ENCODE measurements at regions of chr15 and their contacts with region 1.

Region 1: DNA sequence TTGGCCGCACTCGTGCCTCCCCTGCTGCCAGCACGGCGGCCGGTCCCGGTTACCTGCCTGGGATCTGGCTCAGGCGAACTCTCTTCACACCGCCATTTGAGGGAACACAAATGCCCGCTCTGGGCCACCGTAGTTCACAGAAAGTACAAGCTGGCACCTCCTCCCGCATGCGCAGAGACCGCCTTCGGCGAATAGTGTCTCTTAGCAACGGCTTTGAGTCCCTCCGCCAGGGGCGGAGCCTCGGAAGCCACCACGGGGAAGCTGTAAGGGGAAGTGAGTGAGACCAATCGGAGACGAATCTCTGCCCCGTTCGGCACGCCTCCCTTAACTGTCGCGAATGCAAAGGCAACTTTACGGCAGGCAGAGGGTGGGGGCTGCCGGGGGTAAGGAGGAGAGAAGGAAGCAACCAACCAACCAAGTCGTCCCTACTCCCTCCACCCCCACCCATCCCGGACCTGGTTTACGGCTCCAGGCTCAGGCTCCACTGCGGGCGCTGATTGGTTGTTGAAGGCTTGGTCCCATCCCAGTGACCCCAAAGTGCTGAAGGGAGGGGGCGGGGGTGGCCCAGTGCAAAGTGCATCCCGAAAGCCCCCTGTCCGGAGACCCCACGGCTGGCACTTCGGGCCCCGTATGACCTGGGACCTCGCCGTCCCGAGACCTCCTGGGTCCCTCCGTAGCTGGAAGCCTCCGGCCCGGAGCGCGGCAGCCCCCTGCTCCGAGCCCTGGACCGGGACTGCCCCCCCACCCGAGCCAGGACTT is at the starts of genes ASB7 and LINS1:
- DNase-seq: peak; percentile 97
- ATAC-seq: peak; percentile 87
- H3K4me3 Mint-ChIP-seq: no peak within 1 kb of the TSS
- H3K27ac Mint-ChIP-seq: no peak within 1 kb of the TSS
- H3K4me1 Mint-ChIP-seq: peaks cover 46% of the 10 kb centered on the region
- H3K27me3 Mint-ChIP-seq: no peaks in the 10 kb centered on the region
- CTCF ChIP-seq: no peak
- total RNA-seq, gene ASB7: 18.3 and 21.3 TPM in 2 replicates
- total RNA-seq, gene LINS1: 31.9 and 33.3 TPM in 2 replicates

Region 2: DNA sequence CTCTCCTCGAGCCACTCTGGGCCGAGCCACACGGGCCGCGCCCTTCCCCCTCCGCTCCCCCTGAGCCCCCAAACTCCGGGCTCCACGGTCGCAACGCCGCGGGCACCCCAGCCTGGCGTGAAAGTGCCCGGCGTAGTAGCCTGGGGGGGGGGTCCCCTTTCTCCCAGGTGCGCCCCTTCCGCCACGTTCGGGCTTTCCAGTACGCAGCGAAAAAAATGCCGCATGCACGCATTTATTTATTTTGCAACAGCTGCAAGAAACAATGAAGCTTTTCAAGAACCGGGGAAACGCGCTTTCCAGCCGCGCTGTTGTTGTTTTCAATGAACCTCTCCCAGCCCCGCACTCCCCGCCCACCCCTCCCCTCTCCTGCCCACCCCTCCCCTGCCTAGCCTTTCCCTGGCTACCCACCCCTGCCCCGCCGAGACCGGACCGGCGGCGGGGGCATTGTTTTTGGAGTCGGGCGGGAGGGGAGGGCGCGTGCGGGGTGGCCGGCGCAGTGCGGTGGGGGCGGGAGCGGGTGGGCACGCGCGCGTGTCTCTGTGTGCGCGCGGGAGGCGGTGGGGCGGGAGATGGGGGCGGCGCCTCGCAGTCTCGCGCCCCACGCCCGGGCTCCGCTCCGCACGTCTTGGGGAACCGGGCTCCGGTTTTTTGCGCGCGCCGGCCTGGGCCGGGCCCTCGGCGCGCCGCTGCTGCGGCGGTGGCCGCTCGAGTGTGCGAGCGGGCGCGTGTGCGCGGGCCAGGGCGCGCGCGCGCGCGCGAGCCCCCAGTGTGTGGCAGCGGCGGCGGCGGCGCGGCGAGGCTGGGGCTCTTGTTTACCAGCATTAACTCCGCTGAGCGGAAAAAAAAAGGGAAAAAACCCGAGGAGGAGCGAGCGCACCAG is 1954.2 kb before region 1 on chr15 and contains the start of gene IGF1R:
- CTCF ChIA-PET with region 1: no interaction called
- POLR2A ChIA-PET with region 1: interaction called, 5 read pairs
- intact Hi-C with region 1: loop called (anchors 5 kb)
- DNase-seq: peak; percentile 88
- ATAC-seq: peak; percentile 83
- H3K4me3 Mint-ChIP-seq: peak within 1 kb of the TSS; percentile 87
- H3K27ac Mint-ChIP-seq: peak within 1 kb of the TSS; percentile 76
- H3K4me1 Mint-ChIP-seq: peaks cover 22% of the 10 kb centered on the region
- H3K27me3 Mint-ChIP-seq: peaks cover 26% of the 10 kb centered on the region
- CTCF ChIP-seq: no peak
- total RNA-seq, gene IGF1R: 5.9 and 6.7 TPM in 2 replicates

Region 3: GRCh38 chr15:99733268-99734039 is 868.8 kb before region 1 on chr15 and contains the start of gene LYSMD4:
- CTCF ChIA-PET with region 1: no interaction called
- POLR2A ChIA-PET with region 1: no interaction called
- intact Hi-C with region 1: loop called (anchors 5 kb)
- DNase-seq: peak; percentile 95
- ATAC-seq: peak; percentile 99
- H3K4me3 Mint-ChIP-seq: peak within 1 kb of the TSS; percentile 85
- H3K27ac Mint-ChIP-seq: peak within 1 kb of the TSS; percentile 83
- H3K4me1 Mint-ChIP-seq: peaks cover 14% of the 10 kb centered on the region
- H3K27me3 Mint-ChIP-seq: no peaks in the 10 kb centered on the region
- CTCF ChIP-seq: no peak
- total RNA-seq, gene LYSMD4: 4.7 and 6.1 TPM in 2 replicates

Region 4: DNA sequence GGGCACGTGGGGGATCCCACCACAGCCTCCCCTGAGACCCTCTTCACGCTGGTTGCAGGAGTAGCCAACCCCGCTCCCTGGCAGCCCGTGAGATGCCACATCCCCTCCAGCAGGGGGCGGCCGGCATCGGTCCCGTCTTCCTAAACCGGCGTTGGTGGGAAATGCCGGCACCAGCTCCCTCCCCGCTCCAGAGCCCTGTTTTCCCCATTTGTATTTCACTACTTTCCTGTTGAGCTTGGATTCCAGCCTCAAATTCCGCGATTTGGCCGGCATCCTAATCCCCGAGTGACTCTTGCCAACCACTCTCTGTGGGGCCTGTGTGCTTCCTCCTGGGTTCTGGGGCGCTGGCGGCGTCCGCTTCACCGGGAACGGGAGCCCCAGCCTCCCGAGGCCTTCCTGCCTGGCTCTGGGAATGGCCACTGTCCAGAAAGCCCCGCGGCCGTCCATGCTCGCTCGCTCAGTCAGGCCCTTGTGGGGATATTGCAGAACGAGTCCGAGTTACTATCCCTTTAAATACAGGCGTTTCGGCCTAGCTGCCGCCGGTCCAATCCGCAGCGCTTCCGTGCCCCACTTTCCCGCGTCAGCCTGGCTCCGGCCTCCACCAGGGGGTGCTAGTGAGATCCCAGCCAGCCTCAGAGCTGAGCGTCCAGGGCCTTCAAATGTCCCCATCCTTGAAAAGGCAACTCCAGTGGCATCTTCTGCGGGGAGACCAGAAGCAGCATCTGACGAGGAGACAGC is 252.4 kb before region 1 on chr15:
- CTCF ChIA-PET with region 1: interaction called, 23 read pairs
- POLR2A ChIA-PET with region 1: interaction called, 7 read pairs
- intact Hi-C with region 1: loop called (anchors 1 kb)
- DNase-seq: peak; percentile 69
- ATAC-seq: peak; percentile 92
- H3K4me3 Mint-ChIP-seq: peak overlapping the region; percentile 90
- H3K27ac Mint-ChIP-seq: peak overlapping the region; percentile 46
- H3K4me1 Mint-ChIP-seq: peaks cover 10% of the 10 kb centered on the region
- H3K27me3 Mint-ChIP-seq: peaks cover 10% of the 10 kb centered on the region
- CTCF ChIP-seq: peak; percentile 19

Region 5: DNA sequence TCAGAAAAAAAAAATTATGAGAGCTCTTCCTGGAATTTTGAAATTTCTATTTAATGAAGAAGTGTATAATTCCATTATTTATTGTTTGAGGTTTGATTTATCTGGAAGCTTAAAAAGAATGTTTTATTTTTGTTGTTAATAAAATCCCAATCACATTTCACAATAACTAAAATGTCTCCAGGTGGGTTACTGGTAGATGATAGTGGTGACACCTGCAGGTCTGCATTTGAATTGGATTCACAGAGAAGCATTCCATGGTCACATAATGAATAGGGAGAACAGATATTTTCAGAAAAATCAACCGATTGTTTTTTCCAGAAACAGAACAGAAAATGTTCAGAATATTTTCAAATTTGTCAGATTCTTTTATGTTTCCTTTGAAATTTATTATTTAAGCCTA is 48.4 kb after region 1 on chr15:
- CTCF ChIA-PET with region 1: no interaction called
- POLR2A ChIA-PET with region 1: no interaction called
- intact Hi-C with region 1: no loop called
- DNase-seq: no peak
- ATAC-seq: no peak
- H3K4me3 Mint-ChIP-seq: no peak overlapping the region
- H3K27ac Mint-ChIP-seq: no peak overlapping the region
- H3K4me1 Mint-ChIP-seq: no peaks in the 10 kb centered on the region
- H3K27me3 Mint-ChIP-seq: no peaks in the 10 kb centered on the region
- CTCF ChIP-seq: no peak

Region 6: DNA sequence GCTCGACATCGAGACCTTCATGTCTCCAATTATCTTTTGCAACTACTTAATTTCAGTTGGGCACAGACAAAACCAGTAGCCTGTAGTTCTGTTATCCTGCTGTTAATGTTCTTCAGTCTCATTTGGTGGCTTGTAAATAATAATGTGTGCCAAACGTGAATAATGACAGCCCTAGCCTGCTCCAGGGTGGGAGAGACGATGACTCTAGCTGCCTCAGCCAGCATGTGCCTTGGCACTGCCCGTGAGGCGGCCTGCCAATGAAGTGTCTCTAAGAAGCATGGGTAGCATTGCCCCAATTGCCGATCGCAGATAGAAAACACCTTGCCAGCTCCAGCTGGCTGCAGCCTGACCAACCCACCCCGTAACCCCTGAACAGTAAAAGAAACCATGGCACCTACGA is 58.9 kb after region 1 on chr15:
- CTCF ChIA-PET with region 1: no interaction called
- POLR2A ChIA-PET with region 1: no interaction called
- intact Hi-C with region 1: no loop called
- DNase-seq: no peak
- ATAC-seq: no peak
- H3K4me3 Mint-ChIP-seq: no peak overlapping the region
- H3K27ac Mint-ChIP-seq: no peak overlapping the region
- H3K4me1 Mint-ChIP-seq: no peaks in the 10 kb centered on the region
- H3K27me3 Mint-ChIP-seq: peaks cover 2% of the 10 kb centered on the region
- CTCF ChIP-seq: no peak

Region 7: DNA sequence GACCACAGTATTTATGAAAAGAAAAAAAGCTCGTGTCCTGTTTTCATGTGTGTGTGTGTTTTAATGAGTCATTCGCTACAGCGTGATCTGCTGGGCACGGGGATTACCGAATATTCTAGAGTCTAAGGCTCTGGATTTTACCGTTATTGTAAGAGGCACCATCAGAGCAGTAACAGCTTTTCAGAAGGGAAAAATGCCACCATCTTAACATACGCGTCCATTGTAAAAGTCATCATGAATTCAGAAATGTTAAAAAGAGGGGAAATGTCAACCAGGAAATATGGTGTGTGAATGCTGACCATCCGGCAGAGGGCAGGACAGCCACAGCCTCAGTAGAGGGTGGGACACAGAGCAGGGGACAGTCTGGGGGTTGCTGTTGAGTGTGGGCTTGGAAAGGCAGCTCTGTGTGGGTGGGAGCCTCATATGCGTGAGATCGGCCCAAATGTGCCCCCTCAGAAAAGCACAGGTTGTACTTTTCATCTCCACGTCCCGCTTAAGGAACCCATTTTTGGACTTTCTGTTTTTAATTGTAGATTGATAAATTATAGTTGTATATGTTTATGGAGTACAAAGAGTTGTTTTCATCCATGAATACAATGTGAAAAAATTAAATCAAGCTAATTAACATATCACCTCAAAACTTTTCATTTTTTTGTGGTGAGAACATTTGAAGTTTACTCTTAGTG is 69.8 kb after region 1 on chr15:
- CTCF ChIA-PET with region 1: no interaction called
- POLR2A ChIA-PET with region 1: no interaction called
- intact Hi-C with region 1: no loop called
- DNase-seq: no peak
- ATAC-seq: no peak
- H3K4me3 Mint-ChIP-seq: no peak overlapping the region
- H3K27ac Mint-ChIP-seq: no peak overlapping the region
- H3K4me1 Mint-ChIP-seq: no peaks in the 10 kb centered on the region
- H3K27me3 Mint-ChIP-seq: peaks cover 2% of the 10 kb centered on the region
- CTCF ChIP-seq: no peak

Region 8: GRCh38 chr15:101251830-101252820 is 649.9 kb after region 1 on chr15 and contains the start of gene CHSY1:
- CTCF ChIA-PET with region 1: no interaction called
- POLR2A ChIA-PET with region 1: no interaction called
- intact Hi-C with region 1: loop called (anchors 1 kb)
- DNase-seq: peak; percentile 93
- ATAC-seq: peak; percentile 88
- H3K4me3 Mint-ChIP-seq: peak within 1 kb of the TSS; percentile 95
- H3K27ac Mint-ChIP-seq: peak within 1 kb of the TSS; percentile 92
- H3K4me1 Mint-ChIP-seq: peaks cover 43% of the 10 kb centered on the region
- H3K27me3 Mint-ChIP-seq: no peaks in the 10 kb centered on the region
- CTCF ChIP-seq: no peak
- total RNA-seq, gene CHSY1: 16.5 and 20.4 TPM in 2 replicates

Region 9: GRCh38 chr15:101652098-101652782 is 1050.0 kb after region 1 on chr15 and contains the start of gene TM2D3:
- CTCF ChIA-PET with region 1: no interaction called
- POLR2A ChIA-PET with region 1: no interaction called
- intact Hi-C with region 1: loop called (anchors 1 kb)
- DNase-seq: peak; percentile 99
- ATAC-seq: peak; percentile 87
- H3K4me3 Mint-ChIP-seq: peak within 1 kb of the TSS; percentile 92
- H3K27ac Mint-ChIP-seq: peak within 1 kb of the TSS; percentile 95
- H3K4me1 Mint-ChIP-seq: peaks cover 46% of the 10 kb centered on the region
- H3K27me3 Mint-ChIP-seq: no peaks in the 10 kb centered on the region
- CTCF ChIP-seq: no peak
- total RNA-seq, gene TM2D3: 45.8 and 49.9 TPM in 2 replicates